ENCODE measurements at regions of chr3 and their contacts with region 1.

Region 1: DNA sequence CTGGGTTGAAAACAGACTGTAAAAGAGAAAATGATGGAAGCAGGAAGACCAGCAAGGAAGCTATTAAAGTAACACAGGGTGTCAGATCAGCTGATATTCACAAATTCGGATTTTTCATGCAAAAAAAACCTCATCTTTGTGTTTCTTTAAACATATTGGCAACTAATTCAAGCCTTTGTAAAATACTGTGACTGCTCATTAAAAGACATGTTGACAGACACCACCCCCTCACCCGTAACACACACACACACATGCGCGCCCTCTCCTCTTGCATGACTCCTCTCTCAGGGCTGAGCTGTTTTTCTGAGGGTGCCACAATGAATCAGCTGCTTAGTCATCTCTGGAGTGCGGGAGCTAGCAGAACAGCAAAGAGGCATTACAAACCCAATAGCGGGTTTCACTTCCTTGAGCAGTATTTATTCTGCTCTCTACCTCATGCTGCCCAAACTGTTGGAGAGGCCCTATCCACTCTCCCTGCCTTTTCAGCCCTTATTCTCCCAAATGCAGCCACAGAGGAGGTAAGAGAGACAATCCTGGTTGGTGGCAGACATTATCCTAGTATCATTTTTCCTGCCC is 35.8 kb upstream of the CCDC80 start:
- DNase-seq: peak; percentile 97
- H3K4me3 Mint-ChIP-seq: peak overlapping the region; percentile 14
- H3K27ac Mint-ChIP-seq: peak overlapping the region; percentile 54
- H3K4me1 Mint-ChIP-seq: peaks cover 42% of the 10 kb centered on the region
- H3K27me3 Mint-ChIP-seq: peaks cover 14% of the 10 kb centered on the region

Region 2: DNA sequence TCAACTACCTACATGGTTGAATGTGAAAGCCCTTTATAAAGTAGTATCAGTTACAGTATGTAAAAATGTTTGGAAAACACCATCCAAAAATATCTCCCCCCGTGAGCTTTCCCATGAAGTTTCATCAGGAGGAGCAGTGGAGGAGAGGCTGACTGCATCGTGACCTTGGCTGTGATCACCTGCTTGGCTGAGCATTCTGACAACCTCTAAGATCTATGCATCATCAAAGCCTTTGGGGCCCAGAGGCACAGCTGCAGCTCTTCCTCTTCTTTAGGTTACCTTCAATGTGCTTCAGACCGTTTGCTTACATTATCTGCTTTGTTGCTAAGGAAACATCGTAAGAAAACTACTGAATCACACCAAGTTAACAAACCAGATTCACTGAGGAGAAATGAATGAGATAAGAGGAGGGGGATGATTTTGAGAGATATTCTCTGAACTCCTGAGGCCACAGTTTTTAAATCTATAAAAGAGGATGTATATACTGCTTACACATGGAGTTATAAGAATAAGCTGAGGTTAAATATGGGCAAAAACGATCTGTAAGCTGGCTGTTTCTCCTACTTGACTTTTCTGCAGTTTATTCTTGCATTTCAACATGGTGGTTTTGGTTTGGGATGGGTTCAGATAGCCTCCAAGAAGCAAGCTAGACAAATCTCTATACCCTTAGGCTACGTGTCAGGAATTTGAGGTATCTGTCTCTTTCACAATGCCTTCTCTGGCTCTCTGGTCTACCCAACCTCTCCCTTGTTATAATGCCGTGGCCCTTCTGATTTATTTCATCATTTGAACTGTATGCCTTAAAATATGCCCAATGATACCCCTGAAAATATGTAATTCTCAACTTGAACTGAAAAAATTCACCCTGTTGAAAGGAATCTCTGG is 547.7 kb before region 1 on chr3:
- CTCF ChIA-PET with region 1: no interaction called
- intact Hi-C with region 1: loop called (anchors 5 kb)
- DNase-seq: peak; percentile 82
- H3K4me3 Mint-ChIP-seq: peak overlapping the region; percentile 4
- H3K27ac Mint-ChIP-seq: peak overlapping the region; percentile 76
- H3K4me1 Mint-ChIP-seq: peaks cover 74% of the 10 kb centered on the region
- H3K27me3 Mint-ChIP-seq: no peaks in the 10 kb centered on the region

Region 3: GRCh38 chr3:112303764-112304325 is 372.9 kb before region 1 on chr3:
- CTCF ChIA-PET with region 1: no interaction called
- intact Hi-C with region 1: loop called (anchors 5 kb)
- DNase-seq: peak; percentile 52
- H3K4me3 Mint-ChIP-seq: no peak overlapping the region
- H3K27ac Mint-ChIP-seq: no peak overlapping the region
- H3K4me1 Mint-ChIP-seq: no peaks in the 10 kb centered on the region
- H3K27me3 Mint-ChIP-seq: no peaks in the 10 kb centered on the region

Region 4: DNA sequence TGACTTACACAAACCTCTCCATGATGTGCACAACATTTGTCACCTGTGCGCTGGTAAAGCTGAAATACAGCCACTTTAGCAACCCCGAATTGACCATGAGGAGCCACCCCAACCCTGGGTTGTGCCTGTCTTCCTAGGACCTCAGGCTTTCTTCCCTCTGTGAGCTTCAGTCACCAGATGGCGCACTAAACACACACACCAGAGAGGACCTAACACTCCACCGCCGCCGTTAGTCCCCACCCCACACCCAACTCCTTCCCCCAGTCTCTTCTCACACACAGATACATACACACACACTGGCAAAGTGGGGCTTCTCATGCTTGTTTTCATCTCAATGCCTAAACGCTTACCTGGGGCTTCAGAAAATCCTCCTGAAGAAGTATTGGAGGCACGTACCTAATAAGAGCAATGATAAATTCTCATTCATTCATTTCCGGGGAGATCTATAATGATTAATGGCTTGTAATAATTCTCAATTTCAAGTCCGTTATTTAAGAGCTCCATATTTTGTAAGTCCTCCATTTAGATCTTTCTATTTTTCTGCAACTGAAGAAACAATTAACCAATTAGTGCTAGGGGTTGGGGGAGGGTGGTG is 33.7 kb before region 1 on chr3:
- CTCF ChIA-PET with region 1: interaction called, 3 read pairs
- intact Hi-C with region 1: loop called (anchors 1 kb)
- DNase-seq: peak; percentile 92
- H3K4me3 Mint-ChIP-seq: peak overlapping the region; percentile 55
- H3K27ac Mint-ChIP-seq: no peak overlapping the region
- H3K4me1 Mint-ChIP-seq: peaks cover 14% of the 10 kb centered on the region
- H3K27me3 Mint-ChIP-seq: peaks cover 10% of the 10 kb centered on the region

Region 5: GRCh38 chr3:112958811-112959560 is 282.2 kb after region 1 on chr3:
- CTCF ChIA-PET with region 1: no interaction called
- intact Hi-C with region 1: loop called (anchors 2 kb)
- DNase-seq: peak; percentile 31
- H3K4me3 Mint-ChIP-seq: peak overlapping the region; percentile 56
- H3K27ac Mint-ChIP-seq: no peak overlapping the region
- H3K4me1 Mint-ChIP-seq: peaks cover 35% of the 10 kb centered on the region
- H3K27me3 Mint-ChIP-seq: no peaks in the 10 kb centered on the region

Region 6: DNA sequence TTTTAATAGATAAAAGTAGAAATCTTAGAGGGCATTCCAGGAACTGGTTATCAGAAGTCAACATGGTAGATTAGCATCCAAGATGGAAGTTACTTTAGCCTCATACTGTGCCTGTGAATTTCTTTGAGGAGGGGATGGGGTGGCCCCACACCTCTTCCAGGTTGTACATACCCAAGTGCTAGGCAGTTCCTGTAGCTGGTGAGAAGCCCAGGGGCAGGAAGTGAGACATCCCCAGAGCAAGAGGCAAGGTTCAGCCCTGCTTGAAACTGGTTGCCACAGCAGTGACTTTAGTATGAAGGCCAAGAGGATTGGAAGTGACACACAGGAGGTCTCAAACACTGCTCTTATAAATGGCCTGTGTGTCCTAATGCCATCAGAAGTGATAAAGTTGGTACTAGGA is 325.9 kb after region 1 on chr3:
- CTCF ChIA-PET with region 1: no interaction called
- intact Hi-C with region 1: loop called (anchors 1 kb)
- DNase-seq: peak; percentile 90
- H3K4me3 Mint-ChIP-seq: peak overlapping the region; percentile 42
- H3K27ac Mint-ChIP-seq: peak overlapping the region; percentile 95
- H3K4me1 Mint-ChIP-seq: peaks cover 86% of the 10 kb centered on the region
- H3K27me3 Mint-ChIP-seq: no peaks in the 10 kb centered on the region

Region 7: DNA sequence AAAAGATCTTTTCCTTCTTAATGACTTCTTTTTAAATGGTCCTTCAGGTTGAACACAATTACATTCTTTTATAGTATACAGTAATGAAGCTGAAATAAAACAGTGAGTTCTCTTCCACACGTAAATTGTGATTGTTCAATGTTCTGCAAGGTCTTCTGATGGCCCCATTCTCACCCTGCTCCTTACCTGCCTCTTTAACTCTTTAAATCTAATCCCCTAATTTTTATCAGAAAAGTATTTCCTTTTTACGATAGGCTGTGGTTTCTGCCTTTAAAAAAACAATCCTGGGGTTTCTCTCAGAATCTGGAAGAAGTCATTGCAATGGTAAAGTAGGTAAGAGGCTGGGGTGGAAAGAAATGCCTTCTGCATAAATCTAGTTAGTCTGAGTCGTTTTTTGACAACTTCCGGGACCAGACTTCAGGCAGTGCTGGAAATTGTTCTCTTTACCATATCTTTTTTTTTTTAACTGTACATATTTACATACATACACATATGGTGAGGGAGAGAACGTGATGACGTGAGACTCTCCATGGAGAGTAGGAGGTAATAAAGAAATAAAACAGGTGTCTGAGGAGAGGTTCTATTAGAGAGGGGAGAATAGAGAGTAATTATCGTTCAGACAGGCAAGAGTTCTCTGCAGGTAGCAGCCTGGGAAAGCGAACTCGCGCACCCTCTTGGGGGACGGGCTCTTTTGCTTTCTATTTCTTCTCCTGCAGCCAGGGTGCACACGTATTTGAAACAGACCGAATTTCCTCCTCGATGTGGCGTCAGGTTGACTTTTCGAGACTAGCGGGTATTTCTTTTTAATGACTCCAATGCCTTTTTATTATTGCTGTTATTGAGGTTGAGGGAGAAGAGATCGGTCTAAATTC is 855.3 kb after region 1 on chr3 and contains the start of gene SIDT1:
- CTCF ChIA-PET with region 1: no interaction called
- intact Hi-C with region 1: loop called (anchors 10 kb)
- DNase-seq: peak; percentile 82
- H3K4me3 Mint-ChIP-seq: peak within 1 kb of the TSS; percentile 97
- H3K27ac Mint-ChIP-seq: peak within 1 kb of the TSS; percentile 96
- H3K4me1 Mint-ChIP-seq: peaks cover 46% of the 10 kb centered on the region
- H3K27me3 Mint-ChIP-seq: no peaks in the 10 kb centered on the region
- total RNA-seq, gene SIDT1: 14.6 to 14.9 TPM